Right ventricle myocardium inferior (tissue), 1 donor: ENCODE measurements at regions of chr11 and their contacts with region 1.

Region 1: DNA sequence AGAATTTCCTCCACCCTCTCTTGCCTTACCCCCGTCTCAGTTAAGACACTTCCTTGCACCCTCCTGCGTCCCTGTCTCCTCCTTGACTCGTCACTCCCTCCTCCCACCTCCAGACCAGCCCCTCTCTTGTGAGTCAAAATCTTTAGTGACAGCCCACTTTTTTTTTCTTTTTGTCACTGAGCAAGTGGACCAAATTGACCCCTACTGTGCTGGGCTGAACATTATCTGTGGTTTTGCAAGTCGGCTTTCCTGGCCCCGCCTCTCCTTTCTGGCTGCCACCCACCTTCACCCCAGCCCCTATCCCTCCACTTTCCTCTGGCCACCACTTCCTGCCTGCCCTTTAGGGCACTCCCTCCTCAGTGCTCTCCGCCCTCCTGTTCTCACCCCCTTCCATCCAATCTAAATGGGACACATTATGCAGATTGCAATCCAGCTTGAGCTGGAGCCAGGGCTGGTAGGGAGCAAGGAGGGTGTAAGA is at the start of gene APLNR:
- DNase-seq: peak; percentile 25
- ATAC-seq: peak; percentile 59
- total RNA-seq, gene APLNR: 18.4 TPM

Region 2: DNA sequence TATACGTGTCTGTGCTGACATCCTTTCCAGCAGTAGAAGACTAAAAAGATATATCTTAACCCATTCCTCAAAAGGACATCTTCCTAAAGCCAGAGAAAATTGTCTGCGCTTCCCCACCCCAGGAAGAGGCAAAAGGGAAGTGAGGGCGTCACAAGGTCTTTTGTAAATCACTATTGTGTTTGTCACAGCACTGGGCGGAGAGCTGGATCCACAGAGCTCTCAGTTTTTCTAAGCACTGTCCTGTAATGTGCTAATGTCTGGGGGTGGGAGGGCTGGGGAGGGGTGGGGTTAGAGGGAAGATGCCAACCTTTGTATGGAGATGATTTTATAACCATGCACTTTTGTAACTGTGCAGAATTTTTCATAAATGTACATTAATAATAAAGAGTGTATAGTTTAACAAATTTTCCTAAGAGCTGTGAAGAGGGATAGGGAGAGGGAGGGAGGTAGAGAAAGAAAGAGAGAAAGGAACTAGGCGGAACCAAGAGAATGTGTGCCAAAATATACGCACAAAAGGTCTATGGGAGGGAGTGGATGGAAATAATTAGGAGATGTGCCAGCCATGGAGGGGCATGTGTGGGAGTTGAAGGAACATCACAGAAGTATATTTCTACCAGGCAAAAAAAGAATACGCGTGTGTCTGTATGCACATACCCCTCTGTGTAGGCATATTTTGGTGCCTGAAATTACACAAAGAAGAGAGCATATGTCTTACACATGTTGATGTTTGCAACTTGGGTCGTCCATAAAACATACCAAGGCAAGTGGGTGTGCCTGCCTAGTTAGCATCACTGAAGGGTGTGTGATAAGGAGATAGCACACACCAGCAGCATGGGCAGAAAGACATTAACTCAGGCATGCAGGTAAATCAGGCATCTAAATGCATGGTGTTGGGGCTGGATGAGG is 45.7 kb before region 1 on chr11:
- intact Hi-C with region 1: no loop called
- DNase-seq: no peak
- ATAC-seq: no peak

Region 3: GRCh38 chr11:57203359-57203758 is 33.9 kb before region 1 on chr11:
- intact Hi-C with region 1: loop called (anchors 2 kb)
- DNase-seq: peak; percentile 89
- ATAC-seq: peak; percentile 88

Region 4: DNA sequence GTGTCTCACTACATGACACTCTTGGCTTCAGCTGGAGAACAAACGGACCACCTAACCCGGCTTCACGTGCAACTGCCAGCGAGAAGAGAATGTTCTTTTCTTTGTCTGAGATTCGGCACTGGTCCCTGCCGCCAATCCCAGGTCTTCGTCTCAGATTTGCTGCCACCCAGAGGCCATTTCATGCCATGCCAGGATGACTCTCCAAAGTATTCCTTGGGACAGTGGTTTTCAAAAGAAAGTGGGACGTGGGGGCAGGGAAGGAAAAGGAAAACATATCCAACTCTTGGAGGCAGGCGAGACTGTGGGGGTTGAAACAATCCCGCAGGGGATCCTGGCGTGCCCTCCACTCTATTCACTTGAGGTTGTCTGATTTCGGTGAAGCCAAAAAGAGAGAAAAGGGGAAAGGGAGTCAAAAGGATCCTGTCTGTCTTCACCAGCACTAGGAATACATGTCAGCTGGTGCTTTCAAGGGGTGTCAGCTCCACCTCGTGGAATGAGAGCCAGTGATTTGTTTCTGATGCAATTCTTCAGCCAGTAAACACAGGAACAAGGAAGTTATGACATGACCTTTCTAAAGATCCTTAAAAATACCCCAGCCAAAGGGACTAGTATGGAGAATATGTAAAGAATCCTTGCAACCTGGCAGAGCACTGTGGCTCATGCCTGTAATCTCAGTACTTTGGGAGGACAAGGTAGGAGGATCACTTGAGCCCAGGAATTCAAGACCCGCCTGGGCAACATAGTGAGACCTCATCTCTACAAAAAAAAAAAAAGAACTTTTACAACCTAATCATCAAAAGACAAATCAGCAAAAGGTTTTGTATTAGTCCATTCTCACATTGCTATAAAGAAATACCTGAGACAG is 40.8 kb after region 1 on chr11:
- intact Hi-C with region 1: no loop called
- DNase-seq: peak; percentile 79
- ATAC-seq: peak; percentile 83

Region 5: DNA sequence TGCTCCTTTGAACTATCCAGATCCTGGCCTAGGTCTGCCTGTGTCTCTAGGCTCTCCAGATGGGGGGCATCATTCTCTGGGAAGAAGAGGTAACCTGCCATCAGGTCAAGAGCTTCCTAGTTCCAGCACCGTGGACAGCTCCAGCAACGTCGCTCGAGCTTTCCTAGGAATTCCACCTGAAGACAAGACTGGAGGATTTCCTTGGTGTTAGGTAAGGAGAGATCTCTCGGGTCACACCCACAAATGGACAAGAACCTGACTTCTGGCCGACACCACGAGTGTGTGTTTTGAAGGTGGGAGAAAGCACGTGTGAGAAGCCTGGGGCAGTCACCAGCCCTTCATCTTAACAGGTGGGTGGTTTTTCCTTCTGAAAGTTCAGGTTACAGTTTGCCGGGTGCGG is 142.5 kb after region 1 on chr11:
- intact Hi-C with region 1: no loop called
- DNase-seq: no peak
- ATAC-seq: no peak